IMR-90 (cell line): ENCODE measurements at regions of chr11 and their contacts with region 1.

Region 1: GRCh38 chr11:122085264-122085663 is 30.8 kb downstream of the BLID start:
- DNase-seq: peak; percentile 95
- ATAC-seq: peak; percentile 42
- H3K4me3 ChIP-seq: no peak overlapping the region
- H3K27ac ChIP-seq: no peak overlapping the region
- H3K4me1 ChIP-seq: peaks cover 11% of the 10 kb centered on the region
- H3K27me3 ChIP-seq: no peaks in the 10 kb centered on the region
- CTCF ChIP-seq: no peak
- POLR2A ChIP-seq: no peak
- RAD21 ChIP-seq: no peak

Region 2: DNA sequence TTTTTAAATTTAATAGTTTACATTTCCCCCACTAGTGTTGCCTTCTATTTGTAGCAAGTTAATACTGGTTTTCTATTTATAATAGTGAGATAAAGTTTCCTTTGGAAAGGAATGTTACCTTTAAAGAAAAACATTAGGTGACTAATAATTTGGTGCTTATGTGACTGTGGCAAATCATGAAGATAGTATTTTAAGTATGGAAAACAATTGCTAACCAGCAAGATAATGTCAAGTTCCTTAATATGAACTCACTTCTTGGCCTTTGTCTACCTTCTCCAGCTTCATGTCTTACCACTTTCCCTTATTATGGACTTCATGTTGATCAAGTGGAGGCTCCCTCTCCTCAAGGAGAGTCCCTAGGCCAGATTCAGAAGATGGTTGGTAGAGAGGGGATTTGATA is 1721.8 kb before region 1 on chr11:
- CTCF ChIA-PET with region 1: no interaction called
- POLR2A ChIA-PET with region 1: no interaction called
- dilution Hi-C with region 1: no loop called
- in situ Hi-C with region 1: no loop called
- intact Hi-C with region 1: no loop called
- DNase-seq: no peak
- ATAC-seq: peak; percentile 31
- H3K4me3 ChIP-seq: no peak overlapping the region
- H3K27ac ChIP-seq: peak overlapping the region; percentile 35; the same call in 1 of the 2 replicates
- H3K4me1 ChIP-seq: peaks cover 14% of the 10 kb centered on the region
- H3K27me3 ChIP-seq: no peaks in the 10 kb centered on the region
- CTCF ChIP-seq: no peak
- POLR2A ChIP-seq: no peak
- RAD21 ChIP-seq: no peak

Region 3: GRCh38 chr11:121810291-121810690 is 275.0 kb before region 1 on chr11:
- CTCF ChIA-PET with region 1: no interaction called
- POLR2A ChIA-PET with region 1: no interaction called
- dilution Hi-C with region 1: no loop called
- in situ Hi-C with region 1: no loop called
- intact Hi-C with region 1: loop called (anchors 10 kb)
- DNase-seq: peak; percentile 88
- ATAC-seq: peak; percentile 100
- H3K4me3 ChIP-seq: no peak overlapping the region
- H3K27ac ChIP-seq: peak overlapping the region; percentile 81
- H3K4me1 ChIP-seq: peaks cover 6% of the 10 kb centered on the region
- H3K27me3 ChIP-seq: no peaks in the 10 kb centered on the region
- CTCF ChIP-seq: no peak
- POLR2A ChIP-seq: no peak
- RAD21 ChIP-seq: 0 out of 2 replicates have a peak, but pooled peaks have one; percentile 7

Region 4: GRCh38 chr11:122038543-122038942 is 46.7 kb before region 1 on chr11:
- CTCF ChIA-PET with region 1: no interaction called
- POLR2A ChIA-PET with region 1: no interaction called
- dilution Hi-C with region 1: no loop called
- in situ Hi-C with region 1: no loop called
- intact Hi-C with region 1: loop called (anchors 5 kb)
- DNase-seq: peak; percentile 93
- ATAC-seq: peak; percentile 82
- H3K4me3 ChIP-seq: no peak overlapping the region
- H3K27ac ChIP-seq: peak overlapping the region; percentile 36; the same call in 1 of the 2 replicates
- H3K4me1 ChIP-seq: peaks cover 23% of the 10 kb centered on the region
- H3K27me3 ChIP-seq: no peaks in the 10 kb centered on the region
- CTCF ChIP-seq: no peak
- POLR2A ChIP-seq: no peak
- RAD21 ChIP-seq: no peak

Region 5: DNA sequence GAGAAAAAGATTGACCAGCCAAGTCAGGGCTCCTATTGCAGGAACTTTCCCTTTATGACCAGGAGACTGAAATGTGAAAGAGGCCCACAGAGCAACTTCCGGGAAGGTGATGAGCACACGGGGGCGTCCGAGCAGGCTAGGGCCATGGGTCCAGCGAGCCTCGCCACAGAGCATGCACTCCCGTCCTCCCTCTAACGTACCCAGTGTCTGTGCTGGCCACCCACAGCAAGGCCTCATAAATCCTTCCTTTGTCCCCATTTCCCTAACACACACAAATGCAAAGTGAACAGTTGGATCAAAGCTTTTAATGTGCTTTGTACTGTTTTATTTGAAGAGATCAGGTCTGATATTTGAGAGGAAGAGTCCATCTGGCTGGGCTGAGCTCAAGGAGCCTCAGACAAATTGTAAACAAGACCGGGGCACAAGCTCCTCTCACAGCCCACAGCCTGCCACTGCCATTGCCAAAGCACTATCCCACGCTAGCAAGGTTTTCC is 13.5 kb before region 1 on chr11:
- CTCF ChIA-PET with region 1: interaction called, 3 read pairs
- POLR2A ChIA-PET with region 1: interaction called, 10 read pairs
- dilution Hi-C with region 1: no loop called
- in situ Hi-C with region 1: no loop called
- intact Hi-C with region 1: no loop called
- DNase-seq: no peak
- ATAC-seq: peak; percentile 45
- H3K4me3 ChIP-seq: no peak overlapping the region
- H3K27ac ChIP-seq: peak overlapping the region; percentile 32; the same call in 1 of the 2 replicates
- H3K4me1 ChIP-seq: peaks cover 24% of the 10 kb centered on the region
- H3K27me3 ChIP-seq: no peaks in the 10 kb centered on the region
- CTCF ChIP-seq: no peak
- POLR2A ChIP-seq: no peak
- RAD21 ChIP-seq: no peak

Region 6: DNA sequence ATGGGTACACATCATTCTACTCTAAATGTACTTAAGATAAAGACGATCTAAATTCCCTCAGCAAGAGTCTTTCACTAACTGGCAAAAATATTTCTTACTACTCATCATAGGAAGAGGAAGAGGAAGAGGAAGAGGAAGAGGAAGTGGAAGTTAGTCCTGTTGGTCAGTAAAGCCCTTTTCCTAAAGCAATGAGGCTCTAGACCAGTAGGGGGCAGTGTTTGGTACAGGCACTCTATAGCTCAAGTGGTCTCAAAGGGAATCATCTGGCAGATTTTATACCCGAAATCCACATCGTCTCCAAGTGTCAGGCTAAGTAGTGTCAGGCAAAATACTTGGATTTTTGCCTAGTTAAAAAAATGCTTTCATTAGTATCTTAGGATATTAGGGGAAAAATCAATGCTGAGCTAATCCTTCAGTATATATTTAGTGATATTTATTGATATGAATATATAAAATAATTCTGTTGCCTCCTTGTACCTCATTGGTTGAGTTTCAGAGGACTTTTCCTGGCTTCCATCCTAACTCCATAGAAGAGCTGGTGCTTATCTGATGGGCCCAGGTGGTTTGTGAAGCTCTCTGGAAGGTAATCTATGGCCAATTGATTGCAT is 23.0 kb after region 1 on chr11:
- CTCF ChIA-PET with region 1: no interaction called
- POLR2A ChIA-PET with region 1: no interaction called
- dilution Hi-C with region 1: no loop called
- in situ Hi-C with region 1: no loop called
- intact Hi-C with region 1: no loop called
- DNase-seq: peak; percentile 70
- ATAC-seq: no peak
- H3K4me3 ChIP-seq: no peak overlapping the region
- H3K27ac ChIP-seq: no peak overlapping the region
- H3K4me1 ChIP-seq: peaks cover 25% of the 10 kb centered on the region
- H3K27me3 ChIP-seq: no peaks in the 10 kb centered on the region
- CTCF ChIP-seq: peak; percentile 62
- POLR2A ChIP-seq: no peak
- RAD21 ChIP-seq: peak; percentile 39